Sigmoid colon (tissue), 7 donors: ENCODE measurements at regions of chr7 and their contacts with region 1.

Region 1: GRCh38 chr7:31443457-31443856 is 70.4 kb upstream of the ITPRID1 start:
- DNase-seq: no peak
- H3K4me3 ChIP-seq: no peak overlapping the region
- H3K27ac ChIP-seq: no peak overlapping the region
- H3K4me1 ChIP-seq: no peaks in the 10 kb centered on the region
- H3K27me3 ChIP-seq: no peaks in the 10 kb centered on the region
- CTCF ChIP-seq: peak in 3 of 4 experiments; percentile 52 to 68 (median 54)
- EP300 ChIP-seq: no peak
- POLR2A ChIP-seq: no peak

Region 2: DNA sequence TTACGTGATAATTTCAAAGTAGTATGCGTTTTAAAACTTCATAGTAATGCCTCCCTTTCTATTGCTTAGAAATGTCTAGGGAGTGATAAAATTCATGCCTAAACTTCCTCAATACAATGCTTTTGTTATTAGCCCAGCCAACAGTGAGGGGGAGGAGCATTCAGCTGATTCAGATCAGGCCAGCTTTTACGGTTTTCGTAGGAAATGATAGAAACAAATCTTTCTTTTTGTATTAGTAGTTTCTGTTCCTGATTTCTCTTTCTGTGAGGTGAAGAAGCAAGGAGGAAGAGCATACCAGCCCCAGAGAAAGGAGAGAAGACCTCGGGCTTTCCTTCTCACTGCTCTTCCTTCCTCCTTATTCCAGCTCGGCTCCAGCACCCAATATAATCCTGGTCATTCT is 35.3 kb after region 1 on chr7:
- intact Hi-C with region 1: no loop called
- DNase-seq: no peak
- H3K4me3 ChIP-seq: no peak overlapping the region
- H3K27ac ChIP-seq: no peak overlapping the region
- H3K4me1 ChIP-seq: no peaks in the 10 kb centered on the region
- H3K27me3 ChIP-seq: no peaks in the 10 kb centered on the region
- CTCF ChIP-seq: no peak
- EP300 ChIP-seq: no peak
- POLR2A ChIP-seq: no peak

Region 3: GRCh38 chr7:31633894-31634494 is 190.5 kb after region 1 on chr7:
- intact Hi-C with region 1: loop called (anchors 5 kb)
- DNase-seq: no peak
- H3K4me3 ChIP-seq: no peak overlapping the region
- H3K27ac ChIP-seq: no peak overlapping the region
- H3K4me1 ChIP-seq: no peaks in the 10 kb centered on the region
- H3K27me3 ChIP-seq: no peaks in the 10 kb centered on the region
- CTCF ChIP-seq: peak; percentile 11 to 36 (median 36)
- EP300 ChIP-seq: no peak
- POLR2A ChIP-seq: no peak

Region 4: DNA sequence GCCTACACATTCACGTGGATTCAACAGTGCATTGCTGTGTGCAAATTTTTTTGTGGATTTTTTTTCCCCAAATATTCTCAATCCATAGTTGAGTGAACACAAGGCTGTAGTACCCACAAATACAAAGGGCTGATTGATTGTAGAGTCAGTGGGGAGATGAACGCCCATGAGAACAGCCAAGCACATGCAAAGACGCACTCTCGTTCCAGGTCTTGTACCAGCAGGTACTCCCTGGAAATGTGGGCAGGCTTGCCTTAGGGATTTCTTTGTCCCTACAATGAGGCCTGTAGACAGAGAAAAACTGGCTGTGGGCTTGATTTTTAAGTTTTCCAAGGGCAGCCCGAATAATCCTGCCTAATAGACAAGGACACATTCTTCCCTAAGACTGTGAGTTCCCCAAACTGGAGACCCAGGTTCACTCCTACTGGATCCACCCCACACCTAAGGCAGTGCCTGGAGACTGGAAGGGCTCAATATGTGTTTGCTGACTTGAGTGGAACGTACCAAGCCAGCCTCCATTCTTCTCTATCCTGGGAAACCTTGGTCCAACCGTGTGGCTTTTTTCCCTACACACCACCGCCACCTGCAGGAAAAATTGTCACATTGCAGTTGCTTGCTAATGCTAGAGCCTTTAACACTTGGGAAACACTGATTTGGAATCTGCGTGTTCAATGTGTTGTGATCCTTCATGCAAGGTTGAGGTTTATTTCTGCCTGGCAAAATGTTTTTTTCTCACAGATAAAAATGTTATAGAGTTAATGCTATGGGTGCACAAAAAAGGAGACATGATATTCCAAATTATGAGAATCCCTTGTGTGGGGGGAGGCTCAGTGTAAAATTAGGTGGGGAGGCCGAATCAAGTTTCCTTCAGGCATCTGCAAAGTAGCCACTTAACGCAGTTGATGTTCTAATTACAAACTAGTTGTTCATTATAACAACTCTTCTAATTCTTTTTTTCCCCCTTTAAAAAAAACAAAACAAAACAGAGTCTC is 292.8 kb after region 1 on chr7:
- intact Hi-C with region 1: loop called (anchors 5 kb)
- DNase-seq: peak; percentile 74
- H3K4me3 ChIP-seq: no peak overlapping the region
- H3K27ac ChIP-seq: no peak overlapping the region
- H3K4me1 ChIP-seq: no peaks in the 10 kb centered on the region
- H3K27me3 ChIP-seq: peaks cover 0 to 5% (median 0%) of the 10 kb centered on the region in 3 donors
- CTCF ChIP-seq: peak; percentile 60 to 80 (median 76)
- EP300 ChIP-seq: no peak
- POLR2A ChIP-seq: no peak